Transverse colon (tissue), 4 donors: ENCODE measurements at regions of chr4 and their contacts with region 1.

Region 1: DNA sequence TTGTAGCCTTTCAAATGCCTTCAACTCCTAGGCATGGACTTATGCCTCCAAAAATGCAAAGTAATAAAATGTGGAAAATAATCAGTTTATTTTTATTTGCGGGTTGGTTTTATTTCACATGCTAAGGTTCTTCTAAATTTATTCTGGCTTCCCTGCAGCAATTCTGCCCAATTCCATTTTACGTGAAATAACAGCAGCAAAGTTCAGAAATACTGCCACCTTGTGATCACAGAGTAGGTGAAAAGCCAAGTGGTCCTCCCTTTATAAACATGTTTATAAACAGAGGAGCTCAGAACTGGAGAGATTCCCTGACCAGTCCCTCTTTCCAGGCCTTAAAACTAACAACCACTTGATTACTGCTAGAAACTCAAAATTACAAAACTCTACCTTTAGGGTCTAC is 14.7 kb upstream of the DCHS2 start:
- DNase-seq: no peak
- H3K4me3 ChIP-seq: no peak overlapping the region
- H3K27ac ChIP-seq: no peak overlapping the region
- H3K4me1 ChIP-seq: peaks cover 0 to 3% (median 0%) of the 10 kb centered on the region in 4 donors
- H3K27me3 ChIP-seq: peaks cover 6% of the 10 kb centered on the region
- CTCF ChIP-seq: peak in 4 of 5 experiments; percentile 34 to 46 (median 38)
- EP300 ChIP-seq: no peak
- POLR2A ChIP-seq: no peak

Region 2: GRCh38 chr4:153785910-153786721 is 720.1 kb before region 1 on chr4:
- in situ Hi-C with region 1: loop called in 1 of 4 experiments (anchors 25 kb)
- intact Hi-C with region 1: no loop called
- DNase-seq: no peak
- H3K4me3 ChIP-seq: no peak overlapping the region
- H3K27ac ChIP-seq: no peak overlapping the region
- H3K4me1 ChIP-seq: peaks cover 9 to 23% (median 17%) of the 10 kb centered on the region in 4 donors
- H3K27me3 ChIP-seq: peaks cover 99% of the 10 kb centered on the region
- CTCF ChIP-seq: peak in 4 of 5 experiments; percentile 21 to 35 (median 26)
- EP300 ChIP-seq: no peak
- POLR2A ChIP-seq: no peak

Region 3: GRCh38 chr4:154399259-154399974 is 106.8 kb before region 1 on chr4:
- in situ Hi-C with region 1: loop called in 1 of 4 experiments (anchors 10 kb)
- intact Hi-C with region 1: loop called (anchors 5 kb)
- DNase-seq: no peak
- H3K4me3 ChIP-seq: peak overlapping the region in 3 of 4 donors; percentile 0 to 24 (median 16)
- H3K27ac ChIP-seq: peak overlapping the region; percentile 23 to 54 (median 43)
- H3K4me1 ChIP-seq: no peaks in the 10 kb centered on the region
- H3K27me3 ChIP-seq: no peaks in the 10 kb centered on the region
- CTCF ChIP-seq: peak; percentile 41 to 60 (median 46)
- EP300 ChIP-seq: no peak
- POLR2A ChIP-seq: no peak

Region 4: DNA sequence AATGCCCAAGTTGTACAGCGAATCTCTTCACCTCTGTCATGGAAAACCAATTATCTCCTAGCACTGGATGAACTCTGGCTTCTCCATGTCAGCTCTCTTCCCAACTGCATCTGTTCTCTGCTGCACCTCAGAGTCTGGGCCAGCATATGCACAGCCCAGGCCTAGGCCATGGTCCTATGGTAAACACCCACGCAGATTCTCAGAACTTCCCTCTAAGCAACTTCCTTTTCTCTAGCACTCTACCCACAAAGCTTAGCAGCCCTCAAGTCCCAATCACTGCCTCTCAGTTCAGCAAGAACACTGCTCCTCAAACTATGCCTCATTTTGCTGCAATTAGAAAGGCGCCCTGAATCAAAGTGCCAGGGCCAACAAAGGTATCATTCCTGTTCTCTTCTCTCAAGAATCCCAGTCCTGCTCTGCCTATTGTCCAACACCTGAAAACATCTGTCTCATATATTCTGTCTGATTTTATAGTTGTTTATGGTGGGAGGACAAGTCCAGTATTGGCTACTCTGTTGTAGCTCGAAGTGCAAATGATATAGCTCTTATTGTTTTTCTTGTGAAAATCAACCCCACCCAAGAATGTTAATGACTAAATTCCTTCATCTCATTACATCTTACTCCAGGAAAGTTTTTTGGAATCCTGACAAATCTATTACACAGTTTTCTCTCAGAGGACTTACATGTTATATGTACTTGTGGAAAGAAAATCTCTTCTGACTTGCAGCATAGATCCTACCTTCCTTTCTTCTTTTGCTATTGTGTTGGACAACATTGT is 100.0 kb before region 1 on chr4:
- in situ Hi-C with region 1: loop called in 1 of 4 experiments (anchors 10 kb)
- intact Hi-C with region 1: no loop called
- DNase-seq: no peak
- H3K4me3 ChIP-seq: no peak overlapping the region
- H3K27ac ChIP-seq: no peak overlapping the region
- H3K4me1 ChIP-seq: no peaks in the 10 kb centered on the region
- H3K27me3 ChIP-seq: no peaks in the 10 kb centered on the region
- CTCF ChIP-seq: no peak
- EP300 ChIP-seq: no peak
- POLR2A ChIP-seq: no peak

Region 5: DNA sequence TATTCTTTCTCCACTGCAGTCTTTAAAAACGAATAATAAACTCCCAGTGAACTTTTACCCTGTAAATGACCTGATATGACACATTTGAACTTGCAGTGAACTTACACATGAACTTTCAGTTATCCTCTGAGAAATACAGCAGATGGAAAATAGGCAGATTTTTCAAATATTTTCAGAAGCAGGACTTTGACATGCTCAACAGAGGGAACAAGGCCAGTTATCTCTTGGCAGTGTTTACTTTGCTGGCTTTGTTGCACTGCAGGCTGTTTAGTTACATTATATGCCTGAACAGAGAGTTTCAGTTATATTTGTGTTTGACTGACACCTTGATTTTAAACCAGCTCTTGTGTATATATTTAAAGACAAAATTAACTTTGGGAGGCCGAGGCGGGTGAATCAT is 153.8 kb after region 1 on chr4:
- in situ Hi-C with region 1: no loop called
- intact Hi-C with region 1: no loop called
- DNase-seq: no peak
- H3K4me3 ChIP-seq: no peak overlapping the region
- H3K27ac ChIP-seq: peak overlapping the region in 1 of 4 donors; percentile 12
- H3K4me1 ChIP-seq: peaks cover 0 to 8% (median 0%) of the 10 kb centered on the region in 4 donors
- H3K27me3 ChIP-seq: no peaks in the 10 kb centered on the region
- CTCF ChIP-seq: no peak
- EP300 ChIP-seq: no peak
- POLR2A ChIP-seq: no peak

Region 6: DNA sequence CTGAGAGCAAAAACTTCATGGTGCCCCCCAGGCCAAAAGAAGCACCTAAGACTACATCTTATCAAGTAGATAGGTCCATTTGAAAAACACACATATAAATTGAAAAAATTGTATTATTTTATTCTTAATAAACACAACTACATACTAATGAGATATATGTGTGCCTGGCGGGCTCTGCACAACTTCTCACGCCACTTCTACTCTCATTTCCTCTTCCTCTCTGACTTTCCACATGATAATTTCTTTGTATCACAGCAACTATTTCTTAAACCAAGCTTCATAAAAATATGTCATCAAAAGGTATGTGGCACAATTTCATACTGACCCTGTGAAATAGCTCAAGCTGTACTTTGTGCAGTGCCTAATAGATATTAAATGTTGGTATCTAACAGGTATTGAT is 691.5 kb after region 1 on chr4:
- in situ Hi-C with region 1: no loop called
- intact Hi-C with region 1: no loop called
- DNase-seq: no peak
- H3K4me3 ChIP-seq: no peak overlapping the region
- H3K27ac ChIP-seq: no peak overlapping the region
- H3K4me1 ChIP-seq: peaks cover 0 to 5% (median 0%) of the 10 kb centered on the region in 4 donors
- H3K27me3 ChIP-seq: no peaks in the 10 kb centered on the region
- CTCF ChIP-seq: no peak
- EP300 ChIP-seq: no peak
- POLR2A ChIP-seq: no peak